ENCODE measurements at regions of chr20 and their contacts with region 1.

Region 1: DNA sequence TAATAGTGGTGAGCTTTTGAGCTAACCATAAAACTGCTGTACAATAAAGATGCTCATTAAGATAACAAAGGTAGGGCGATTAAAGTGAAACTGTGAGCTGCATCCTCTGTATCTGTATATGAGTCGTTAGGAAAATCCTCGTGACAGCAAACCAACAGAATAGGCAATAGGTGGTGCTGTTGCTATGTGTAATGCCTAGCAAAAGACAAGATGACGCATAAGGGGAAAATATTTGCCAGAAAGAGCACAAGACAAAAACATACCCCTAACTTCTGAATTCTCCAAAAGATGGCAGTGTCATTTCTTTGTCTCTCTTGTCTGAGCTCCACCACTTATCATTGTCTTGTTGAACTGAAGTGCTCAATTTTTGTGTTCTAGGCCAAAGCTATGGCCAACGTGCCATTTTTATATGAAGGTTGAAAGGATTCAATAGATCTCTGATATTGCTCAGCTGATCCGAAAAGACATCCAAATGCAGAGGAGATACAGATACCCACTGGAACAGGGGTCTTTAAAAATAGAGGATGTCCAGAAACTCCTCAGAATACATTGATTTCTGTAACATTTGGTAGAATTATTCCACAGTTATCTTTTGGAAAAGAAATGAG is 56.3 kb upstream of the ANKEF1 start:
- DNase-seq: peak; percentile 86
- H3K4me3 ChIP-seq: peak overlapping the region in 2 of 3 experiments; percentile 25 to 38
- H3K27ac ChIP-seq: peak overlapping the region; percentile 42
- H3K4me1 ChIP-seq: peaks cover 7% of the 10 kb centered on the region
- H3K27me3 ChIP-seq: no peaks in the 10 kb centered on the region
- CTCF ChIP-seq: peak; percentile 80 to 81

Region 2: GRCh38 chr20:9407805-9408421 is 570.6 kb before region 1 on chr20:
- CTCF ChIA-PET with region 1: no interaction called
- dilution Hi-C with region 1: no loop called
- in situ Hi-C with region 1: no loop called
- intact Hi-C with region 1: loop called (anchors 5 kb)
- DNase-seq: peak; percentile 53
- H3K4me3 ChIP-seq: no peak overlapping the region
- H3K27ac ChIP-seq: no peak overlapping the region
- H3K4me1 ChIP-seq: peaks cover 9% of the 10 kb centered on the region
- H3K27me3 ChIP-seq: no peaks in the 10 kb centered on the region
- CTCF ChIP-seq: peak; percentile 71 to 80

Region 3: DNA sequence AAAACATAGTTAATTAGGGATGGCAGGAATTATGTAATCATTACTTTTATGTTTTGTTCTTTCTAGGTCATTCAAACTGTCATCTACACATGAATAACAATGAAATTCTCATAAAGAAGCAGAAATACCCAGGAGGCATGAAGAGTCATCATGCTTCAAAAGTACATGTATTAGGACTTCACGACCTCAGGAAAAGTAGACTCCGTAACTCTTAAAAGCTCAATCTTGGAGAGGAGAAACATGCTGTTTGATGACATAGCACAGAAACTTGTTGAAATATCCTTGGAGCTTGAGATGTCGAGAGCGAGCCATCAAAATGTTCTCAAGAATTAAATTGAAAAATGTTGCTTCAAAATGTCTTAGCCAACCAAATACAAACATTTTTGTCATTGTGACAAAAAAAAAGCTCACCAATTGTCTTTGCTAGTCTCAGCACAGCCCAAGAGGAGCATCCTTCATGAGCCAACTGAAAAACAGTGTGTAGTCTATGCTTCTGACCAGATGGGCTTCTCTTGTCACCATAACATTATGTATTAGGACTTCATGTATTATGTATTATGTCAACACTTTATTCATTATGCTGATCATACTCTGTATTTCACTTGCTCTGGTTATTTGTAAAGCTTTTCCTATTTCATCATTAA is 28.1 kb after region 1 on chr20:
- CTCF ChIA-PET with region 1: no interaction called
- dilution Hi-C with region 1: no loop called
- in situ Hi-C with region 1: no loop called
- intact Hi-C with region 1: no loop called
- DNase-seq: no peak
- H3K4me3 ChIP-seq: no peak overlapping the region
- H3K27ac ChIP-seq: no peak overlapping the region
- H3K4me1 ChIP-seq: no peaks in the 10 kb centered on the region
- H3K27me3 ChIP-seq: no peaks in the 10 kb centered on the region
- CTCF ChIP-seq: no peak

Region 4: DNA sequence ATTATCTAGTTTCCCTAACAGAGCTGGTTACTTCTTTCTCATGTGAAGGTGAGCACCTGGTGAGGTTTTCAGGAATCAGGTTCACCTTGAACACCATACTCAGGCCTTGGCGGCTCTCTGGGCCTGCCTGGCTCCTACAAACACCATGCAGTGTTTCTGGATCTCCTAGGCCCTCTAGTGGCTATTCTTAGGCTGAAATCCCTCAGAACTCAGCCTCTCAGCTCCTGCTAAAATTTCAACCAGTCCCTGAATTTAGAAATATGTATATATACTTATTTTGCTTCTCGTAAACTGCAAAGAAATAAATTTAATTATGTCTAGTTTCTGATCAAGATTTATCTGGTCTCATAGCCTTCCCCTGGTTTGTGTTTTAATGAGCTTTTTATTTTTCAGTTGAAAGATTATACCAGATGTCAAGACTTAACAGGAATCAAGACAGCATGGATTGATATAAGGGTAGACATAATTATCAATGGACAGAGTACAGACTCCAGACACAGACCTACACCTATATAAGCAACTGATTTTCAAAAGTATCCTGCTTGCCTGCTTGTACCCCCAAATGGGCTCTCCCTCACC is 112.2 kb after region 1 on chr20:
- CTCF ChIA-PET with region 1: interaction called, 35 read pairs
- dilution Hi-C with region 1: no loop called
- in situ Hi-C with region 1: loop called (anchors 5 kb)
- intact Hi-C with region 1: loop called (anchors 1 kb)
- DNase-seq: peak; percentile 58
- H3K4me3 ChIP-seq: no peak overlapping the region
- H3K27ac ChIP-seq: no peak overlapping the region
- H3K4me1 ChIP-seq: peaks cover 23% of the 10 kb centered on the region
- H3K27me3 ChIP-seq: no peaks in the 10 kb centered on the region
- CTCF ChIP-seq: peak; percentile 76 to 91

Region 5: GRCh38 chr20:10192171-10192570 is 213.7 kb after region 1 on chr20:
- CTCF ChIA-PET with region 1: no interaction called
- dilution Hi-C with region 1: no loop called
- in situ Hi-C with region 1: no loop called
- intact Hi-C with region 1: no loop called
- DNase-seq: no peak
- H3K4me3 ChIP-seq: no peak overlapping the region
- H3K27ac ChIP-seq: no peak overlapping the region
- H3K4me1 ChIP-seq: no peaks in the 10 kb centered on the region
- H3K27me3 ChIP-seq: no peaks in the 10 kb centered on the region
- CTCF ChIP-seq: no peak

Region 6: GRCh38 chr20:10427060-10427692 is 448.7 kb after region 1 on chr20:
- CTCF ChIA-PET with region 1: no interaction called
- dilution Hi-C with region 1: no loop called
- in situ Hi-C with region 1: loop called in 1 of 2 experiments (anchors 10 kb)
- intact Hi-C with region 1: loop called (anchors 1 kb)
- DNase-seq: peak; percentile 47
- H3K4me3 ChIP-seq: no peak overlapping the region
- H3K27ac ChIP-seq: no peak overlapping the region
- H3K4me1 ChIP-seq: peaks cover 18% of the 10 kb centered on the region
- H3K27me3 ChIP-seq: no peaks in the 10 kb centered on the region
- CTCF ChIP-seq: peak; percentile 79 to 90

Region 7: DNA sequence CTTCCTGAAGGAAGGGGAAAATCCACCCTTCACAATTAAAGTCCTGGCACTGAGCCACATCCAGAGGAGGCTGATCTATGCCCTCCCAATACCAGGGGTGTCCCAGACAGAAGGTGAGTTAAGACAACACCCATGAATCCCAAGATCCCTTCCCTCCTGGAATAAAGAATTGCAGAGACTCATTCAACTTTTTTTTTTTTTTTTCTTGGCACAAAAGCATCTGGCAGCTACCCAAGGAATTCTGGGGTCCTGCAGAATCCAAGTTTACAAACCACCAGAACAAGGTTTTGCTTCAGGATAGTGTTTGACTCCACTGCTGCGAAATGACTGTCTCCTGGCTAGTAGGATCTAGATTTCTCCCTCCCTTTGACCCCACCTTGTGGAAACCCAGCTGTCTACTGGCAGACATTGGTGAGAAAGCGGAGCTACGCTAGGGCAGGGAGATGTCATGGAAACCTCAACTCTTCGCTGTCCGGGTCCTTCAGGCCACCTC is 657.9 kb after region 1 on chr20:
- CTCF ChIA-PET with region 1: no interaction called
- dilution Hi-C with region 1: no loop called
- in situ Hi-C with region 1: loop called in 1 of 2 experiments (anchors 25 kb)
- intact Hi-C with region 1: loop called (anchors 5 kb)
- DNase-seq: peak; percentile 31
- H3K4me3 ChIP-seq: no peak overlapping the region
- H3K27ac ChIP-seq: peak overlapping the region; percentile 50
- H3K4me1 ChIP-seq: peaks cover 57% of the 10 kb centered on the region
- H3K27me3 ChIP-seq: no peaks in the 10 kb centered on the region
- CTCF ChIP-seq: peak in 1 of 2 donors; percentile 20

Region 8: GRCh38 chr20:11274141-11274594 is 1295.7 kb after region 1 on chr20:
- CTCF ChIA-PET with region 1: no interaction called
- dilution Hi-C with region 1: no loop called
- in situ Hi-C with region 1: no loop called
- intact Hi-C with region 1: loop called (anchors 1 kb)
- DNase-seq: peak; percentile 81
- H3K4me3 ChIP-seq: no peak overlapping the region
- H3K27ac ChIP-seq: no peak overlapping the region
- H3K4me1 ChIP-seq: no peaks in the 10 kb centered on the region
- H3K27me3 ChIP-seq: no peaks in the 10 kb centered on the region
- CTCF ChIP-seq: peak; percentile 48 to 61